Mucosa of descending colon (tissue), 3 donors: ENCODE measurements at regions of chr1 and their contacts with region 1.

Region 1: DNA sequence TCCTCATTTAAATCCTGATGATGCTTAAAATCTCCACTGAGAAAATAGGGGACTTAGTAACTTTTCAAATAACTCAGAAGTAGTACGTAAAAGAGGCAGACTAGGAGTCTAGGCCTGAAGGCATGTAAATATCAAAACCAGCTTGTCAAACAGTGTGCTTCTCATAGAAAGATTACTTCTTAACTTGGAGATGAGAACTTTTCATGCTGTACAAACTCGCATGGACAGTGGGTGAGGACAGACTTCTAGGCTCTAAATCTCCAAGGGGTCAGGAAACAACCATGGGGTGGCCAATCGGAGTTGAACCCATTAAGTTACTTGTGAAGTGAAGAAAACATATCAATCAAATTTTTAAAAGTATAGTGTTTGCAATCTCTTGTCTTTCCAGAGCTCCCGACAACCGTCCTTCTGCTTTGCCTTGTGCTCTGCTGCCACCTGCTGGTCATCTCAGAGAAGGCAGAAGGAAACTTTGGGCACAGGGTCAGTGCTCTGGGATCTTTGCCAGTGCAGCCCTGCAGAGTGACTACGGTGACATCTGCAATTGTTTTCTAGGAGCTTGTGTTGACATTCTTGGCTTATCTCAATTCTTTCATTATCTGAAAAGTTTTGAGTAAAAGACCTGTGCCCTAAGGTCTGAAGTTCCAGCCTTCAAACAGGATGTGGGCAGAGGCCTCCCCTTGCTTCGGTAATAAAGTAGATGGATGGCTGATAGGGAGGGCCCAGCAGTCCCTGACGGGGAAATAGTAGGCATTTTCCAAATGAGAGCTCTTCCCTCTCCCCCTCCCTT is 105.1 kb upstream of the PDE4B start:
- DNase-seq: peak; percentile 70 to 95 (median 87)
- ATAC-seq: peak; percentile 99
- H3K4me3 ChIP-seq: no peak overlapping the region
- H3K4me1 ChIP-seq: no peaks in the 10 kb centered on the region
- CTCF ChIP-seq: peak; percentile 84

Region 2: DNA sequence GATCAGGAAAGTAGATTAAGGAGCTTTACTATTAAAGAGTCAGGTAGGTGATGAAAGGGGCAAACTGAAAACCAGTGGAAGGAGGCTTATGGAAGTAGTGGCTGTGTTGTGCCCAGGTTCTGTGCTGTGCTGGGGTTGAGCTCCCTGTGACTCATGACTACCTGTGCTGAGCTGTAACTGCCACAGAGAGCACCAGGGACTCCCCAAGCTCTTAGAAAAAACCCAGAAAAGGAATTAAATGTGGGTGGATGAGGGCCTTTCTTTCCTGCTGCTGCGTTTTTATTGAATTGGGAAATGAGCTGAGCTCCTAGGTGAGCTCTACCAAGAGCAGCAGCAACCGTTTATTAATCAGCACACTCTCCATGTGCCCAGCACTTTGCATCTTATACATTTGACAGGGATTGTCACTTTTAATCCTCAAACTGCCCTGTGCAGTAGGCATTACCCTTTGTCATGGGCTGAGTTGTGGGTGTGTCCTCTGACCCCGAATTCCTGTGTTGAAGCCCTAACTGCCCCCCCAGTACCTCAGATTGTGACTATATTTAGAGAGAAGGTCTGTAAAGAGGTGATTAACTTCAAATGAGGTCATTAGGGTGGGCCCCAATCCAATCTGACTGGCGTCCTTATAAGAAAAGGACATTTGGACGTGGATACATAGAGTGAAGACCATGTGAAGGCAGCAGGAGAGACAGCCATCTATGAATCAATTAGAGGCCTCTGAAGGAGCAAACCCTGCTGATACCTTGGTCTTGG is 474.2 kb before region 1 on chr1:
- intact Hi-C with region 1: loop called in 1 of 2 experiments (anchors 10 kb)
- DNase-seq: no peak
- ATAC-seq: no peak
- H3K4me3 ChIP-seq: no peak overlapping the region
- H3K4me1 ChIP-seq: no peaks in the 10 kb centered on the region
- CTCF ChIP-seq: no peak

Region 3: DNA sequence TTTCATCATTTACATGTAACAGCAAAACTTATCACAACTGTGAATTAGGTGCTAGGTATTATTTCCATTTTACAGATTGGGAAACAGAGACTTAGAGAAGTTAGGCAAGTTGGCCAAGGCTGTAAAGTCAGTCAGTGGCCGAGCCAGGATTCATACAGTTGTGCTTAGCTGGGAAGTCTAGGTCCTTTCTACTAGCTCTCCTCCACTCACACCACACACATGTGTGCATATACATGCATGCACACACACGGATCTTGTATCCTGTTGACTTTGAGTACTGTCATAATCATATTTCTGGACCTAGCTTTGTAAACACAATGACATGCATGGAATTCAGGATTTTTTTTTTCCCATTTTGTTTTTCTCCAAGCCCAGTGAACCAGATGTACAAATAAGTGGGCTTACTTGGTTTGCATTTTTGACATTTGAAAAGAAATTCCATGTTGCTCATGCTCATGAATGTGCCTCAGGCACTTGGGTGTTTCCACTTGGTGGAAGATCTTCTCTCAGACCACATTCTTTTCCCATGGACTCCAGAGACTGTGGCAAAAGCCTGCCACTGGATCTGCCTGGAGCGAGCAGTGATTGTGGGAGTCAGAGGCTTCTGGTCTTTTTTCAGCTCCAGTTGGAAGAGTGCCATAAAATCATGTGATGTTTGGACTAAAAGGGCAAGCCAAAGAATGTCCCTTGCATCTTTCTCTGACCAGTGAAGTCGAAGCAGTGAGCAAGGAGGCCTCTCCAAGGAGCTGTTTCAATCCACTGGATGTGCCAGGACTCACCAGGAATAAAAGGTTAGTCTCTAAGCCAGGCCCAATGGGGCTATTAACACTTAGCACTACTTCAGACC is 439.9 kb before region 1 on chr1:
- intact Hi-C with region 1: loop called in 1 of 2 experiments (anchors 10 kb)
- DNase-seq: no peak
- ATAC-seq: no peak
- H3K4me3 ChIP-seq: no peak overlapping the region
- H3K4me1 ChIP-seq: no peaks in the 10 kb centered on the region
- CTCF ChIP-seq: no peak

Region 4: DNA sequence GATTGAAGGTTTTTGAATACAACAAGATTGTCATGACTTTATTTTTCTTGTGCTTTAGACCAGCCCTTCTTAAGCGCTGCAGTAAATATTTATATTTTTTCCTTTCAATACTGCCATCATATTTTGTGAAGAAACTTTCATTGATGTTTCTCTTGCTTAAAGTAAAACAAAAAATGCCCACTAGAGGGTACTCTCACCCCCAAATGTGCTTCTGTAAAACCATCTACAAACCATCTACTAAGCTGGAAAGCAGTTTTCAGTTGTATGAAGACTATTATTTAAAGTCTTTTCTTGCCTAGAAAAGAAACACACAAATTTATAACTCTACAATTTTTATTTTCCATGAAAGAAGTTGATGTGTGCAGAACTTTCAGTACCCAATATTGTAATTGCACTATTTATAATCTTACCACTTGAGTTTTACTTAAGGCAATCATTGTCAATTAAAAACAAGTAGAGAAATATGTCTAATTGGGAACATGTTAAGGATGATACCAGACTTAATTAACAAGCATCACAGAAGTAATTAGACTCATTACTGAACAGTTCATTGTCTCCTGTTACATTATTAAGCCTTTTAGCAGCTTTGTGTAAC is 256.4 kb before region 1 on chr1:
- intact Hi-C with region 1: loop called in 1 of 2 experiments (anchors 5 kb)
- DNase-seq: peak in 1 of 3 donors; percentile 25
- ATAC-seq: peak; percentile 31
- H3K4me3 ChIP-seq: no peak overlapping the region
- H3K4me1 ChIP-seq: no peaks in the 10 kb centered on the region
- CTCF ChIP-seq: no peak